Breast epithelium (tissue), 4 donors: ENCODE measurements at regions of chr10 and their contacts with region 1.

Region 1: GRCh38 chr10:85936161-85936560 is 430.4 kb downstream of the GRID1 start:
- DNase-seq: no peak
- H3K4me3 ChIP-seq: no peak overlapping the region
- H3K27ac ChIP-seq: no peak overlapping the region
- H3K4me1 ChIP-seq: no peaks in the 10 kb centered on the region
- H3K27me3 ChIP-seq: no peaks in the 10 kb centered on the region
- CTCF ChIP-seq: no peak
- POLR2A ChIP-seq: no peak

Region 2: DNA sequence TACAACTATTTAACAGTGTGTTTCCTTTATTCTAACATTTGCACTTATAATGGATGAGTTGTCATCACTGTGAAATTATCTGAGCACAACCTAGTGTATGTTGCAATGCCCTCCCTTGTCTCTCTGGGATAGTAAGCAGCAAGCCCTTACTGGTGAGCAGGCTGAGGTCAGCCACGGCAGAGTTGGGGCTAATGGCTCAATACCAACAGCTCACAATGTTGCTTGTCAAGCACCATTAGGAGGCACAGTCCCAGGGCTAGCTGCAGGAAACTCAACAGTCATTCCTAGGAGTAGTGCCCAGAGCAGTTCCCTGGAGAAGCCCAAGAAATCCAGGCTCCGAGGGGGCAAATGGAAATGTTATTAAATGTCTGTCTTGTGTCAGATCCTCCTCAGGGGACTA is 428.0 kb before region 1 on chr10:
- intact Hi-C with region 1: loop called (anchors 5 kb)
- DNase-seq: no peak
- H3K4me3 ChIP-seq: no peak overlapping the region
- H3K27ac ChIP-seq: no peak overlapping the region
- H3K4me1 ChIP-seq: no peaks in the 10 kb centered on the region
- H3K27me3 ChIP-seq: peaks cover 0 to 3% of the 10 kb centered on the region in 2 donors
- CTCF ChIP-seq: no peak
- POLR2A ChIP-seq: no peak

Region 3: GRCh38 chr10:85916994-85917573 is 19.1 kb before region 1 on chr10:
- intact Hi-C with region 1: no loop called
- DNase-seq: peak in 1 of 2 donors; percentile 44
- H3K4me3 ChIP-seq: no peak overlapping the region
- H3K27ac ChIP-seq: no peak overlapping the region
- H3K4me1 ChIP-seq: no peaks in the 10 kb centered on the region
- H3K27me3 ChIP-seq: no peaks in the 10 kb centered on the region
- CTCF ChIP-seq: no peak
- POLR2A ChIP-seq: no peak

Region 4: DNA sequence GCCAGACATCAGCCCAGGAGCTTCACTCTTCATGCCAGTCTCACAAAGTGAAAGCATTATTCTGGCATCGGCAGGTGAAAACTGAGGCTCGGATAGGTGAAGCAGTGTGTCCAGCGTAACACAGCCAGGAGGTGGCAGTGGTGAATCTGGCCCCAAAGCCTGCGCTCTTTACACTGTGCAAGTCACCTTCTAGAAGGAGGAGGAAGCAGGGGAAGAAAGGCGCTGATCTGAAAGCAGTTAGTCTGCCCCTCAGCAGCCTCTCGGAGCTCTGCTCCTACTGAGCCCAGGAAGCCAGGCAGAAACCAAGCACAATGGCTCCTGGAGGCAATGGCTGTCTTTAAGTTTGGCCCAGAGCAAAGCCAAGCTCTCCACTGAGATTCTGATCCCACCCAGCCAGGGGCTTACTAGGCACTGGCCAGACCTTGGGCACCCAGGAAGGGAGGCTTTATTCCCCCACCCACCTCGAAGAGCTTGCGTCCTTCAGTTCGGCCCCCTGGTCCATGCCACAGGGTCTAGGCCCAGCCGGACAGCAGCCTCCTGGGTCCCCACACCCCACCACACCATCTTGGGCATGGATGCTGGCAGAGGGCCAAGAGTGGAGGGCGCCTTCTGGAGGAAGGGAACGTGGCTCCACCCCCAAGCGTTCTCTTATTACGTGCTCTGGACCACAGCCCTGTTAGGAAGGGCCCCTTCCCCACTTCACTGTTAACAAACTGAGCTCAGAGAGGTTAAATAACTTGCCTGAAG is 326.0 kb after region 1 on chr10:
- intact Hi-C with region 1: no loop called
- DNase-seq: peak in 1 of 2 donors; percentile 16
- H3K4me3 ChIP-seq: peak overlapping the region in 1 of 3 donors; percentile 9
- H3K27ac ChIP-seq: no peak overlapping the region
- H3K4me1 ChIP-seq: no peaks in the 10 kb centered on the region
- H3K27me3 ChIP-seq: no peaks in the 10 kb centered on the region
- CTCF ChIP-seq: no peak
- POLR2A ChIP-seq: no peak

Region 5: GRCh38 chr10:86321568-86321967 is 385.4 kb after region 1 on chr10:
- intact Hi-C with region 1: no loop called
- DNase-seq: peak in 1 of 2 donors; percentile 22
- H3K4me3 ChIP-seq: no peak overlapping the region
- H3K27ac ChIP-seq: no peak overlapping the region
- H3K4me1 ChIP-seq: no peaks in the 10 kb centered on the region
- H3K27me3 ChIP-seq: no peaks in the 10 kb centered on the region
- CTCF ChIP-seq: no peak
- POLR2A ChIP-seq: no peak